T-cell (primary cell): ENCODE measurements at regions of chr16 and their contacts with region 1.

Region 1: GRCh38 chr16:69632836-69633235 is 67.1 kb downstream of the NFAT5 start:
- DNase-seq: no peak
- ATAC-seq: no peak
- H3K4me3 ChIP-seq: no peak overlapping the region
- H3K4me3 Mint-ChIP-seq: no peak overlapping the region
- H3K27ac ChIP-seq: no peak overlapping the region
- H3K27ac Mint-ChIP-seq: no peak overlapping the region
- H3K4me1 ChIP-seq: no peaks in the 10 kb centered on the region
- H3K4me1 Mint-ChIP-seq: peaks cover 0 to 2% (median 0%) of the 10 kb centered on the region in 3 donors
- H3K27me3 ChIP-seq: no peaks in the 10 kb centered on the region
- H3K27me3 Mint-ChIP-seq: no peaks in the 10 kb centered on the region

Region 2: GRCh38 chr16:68028996-68029395 is 1603.8 kb before region 1 on chr16:
- CTCF ChIA-PET with region 1: no interaction called
- POLR2A ChIA-PET with region 1: interaction called in 1 of 2 experiments, 17 read pairs
- DNase-seq: no peak
- ATAC-seq: no peak
- H3K4me3 ChIP-seq: no peak overlapping the region
- H3K4me3 Mint-ChIP-seq: no peak overlapping the region
- H3K27ac ChIP-seq: no peak overlapping the region
- H3K27ac Mint-ChIP-seq: no peak overlapping the region
- H3K4me1 ChIP-seq: peaks cover 0 to 19% of the 10 kb centered on the region in 2 experiments
- H3K4me1 Mint-ChIP-seq: peaks cover 8 to 17% (median 11%) of the 10 kb centered on the region in 3 donors
- H3K27me3 ChIP-seq: no peaks in the 10 kb centered on the region
- H3K27me3 Mint-ChIP-seq: no peaks in the 10 kb centered on the region